Activated CD8-positive, alpha-beta memory T cell treated with anti-CD3 and anti-CD28 coated beads, Interleukin-2, amount 10 ng/mL, durations not matched to agents 7 days and 5 days (primary cell): ENCODE measurements at regions of chr6 and their contacts with region 1.

Region 1: GRCh38 chr6:127971945-127972391 is 71.1 kb upstream of the THEMIS start:
- DNase-seq: peak; percentile 83
- ATAC-seq: peak; percentile 77
- H3K4me3 Mint-ChIP-seq: peak overlapping the region; percentile 80
- H3K27ac Mint-ChIP-seq: peak overlapping the region; percentile 97
- H3K4me1 Mint-ChIP-seq: peaks cover 72% of the 10 kb centered on the region
- H3K27me3 Mint-ChIP-seq: no peaks in the 10 kb centered on the region

Region 2: GRCh38 chr6:127900935-127901334 is 71.0 kb before region 1 on chr6 and contains the start of gene THEMIS:
- CTCF ChIA-PET with region 1: interaction called, 15 read pairs
- DNase-seq: peak; percentile 82
- ATAC-seq: peak; percentile 53
- H3K4me3 Mint-ChIP-seq: peak within 1 kb of the TSS; percentile 97
- H3K27ac Mint-ChIP-seq: peak within 1 kb of the TSS; percentile 94
- H3K4me1 Mint-ChIP-seq: peaks cover 45% of the 10 kb centered on the region
- H3K27me3 Mint-ChIP-seq: no peaks in the 10 kb centered on the region
- total RNA-seq, gene THEMIS: 107 to 133 TPM

Region 3: DNA sequence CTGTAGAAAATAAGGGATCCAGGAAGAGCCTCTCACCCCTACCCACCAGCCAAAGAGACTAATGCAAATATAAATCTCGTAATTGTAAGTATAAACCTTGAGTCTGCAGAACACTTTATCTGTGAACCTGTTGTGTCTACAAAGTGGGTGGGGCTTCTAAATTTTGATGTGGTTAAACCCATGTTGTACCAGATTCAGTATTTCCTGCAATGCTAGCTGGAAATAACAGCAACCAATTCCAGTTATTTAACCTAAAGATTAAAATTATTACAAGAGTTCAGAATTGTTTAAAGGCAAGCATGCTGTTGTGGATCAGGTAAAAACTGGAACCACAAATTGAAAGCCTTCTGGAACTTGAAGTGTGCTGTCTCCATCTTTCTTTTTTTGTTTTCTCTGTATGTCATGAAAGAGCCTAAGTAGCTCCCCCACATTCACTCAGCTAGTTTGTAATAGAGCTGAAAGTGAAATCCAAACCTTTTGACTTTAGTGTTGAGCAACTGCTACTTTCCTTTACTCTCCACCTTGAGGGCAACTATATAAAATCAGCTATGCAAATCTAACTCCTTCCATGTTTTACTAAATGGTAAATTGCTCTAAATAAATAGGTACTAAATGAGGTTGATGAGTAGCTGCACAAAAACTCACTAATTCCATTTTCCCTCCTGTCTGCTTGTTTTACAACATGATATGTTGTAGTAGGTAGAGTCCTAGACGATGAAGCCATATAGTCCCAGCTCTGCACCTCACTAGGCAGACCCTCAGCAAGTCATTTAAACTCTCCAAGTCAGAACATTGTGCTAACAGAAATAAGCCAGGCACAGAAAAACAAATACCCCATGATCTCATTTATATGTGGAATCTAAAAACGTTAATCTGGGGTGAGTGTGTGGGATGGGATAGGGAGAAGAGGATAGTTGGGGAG is 53.2 kb before region 1 on chr6:
- CTCF ChIA-PET with region 1: interaction called, 12 read pairs
- DNase-seq: no peak
- ATAC-seq: peak; percentile 65
- H3K4me3 Mint-ChIP-seq: peak overlapping the region; percentile 70
- H3K27ac Mint-ChIP-seq: peak overlapping the region; percentile 77
- H3K4me1 Mint-ChIP-seq: peaks cover 84% of the 10 kb centered on the region
- H3K27me3 Mint-ChIP-seq: no peaks in the 10 kb centered on the region

Region 4: GRCh38 chr6:127933852-127934840 is 37.8 kb before region 1 on chr6:
- CTCF ChIA-PET with region 1: interaction called, 14 read pairs
- DNase-seq: peak; percentile 88
- ATAC-seq: peak; percentile 89
- H3K4me3 Mint-ChIP-seq: peak overlapping the region; percentile 71
- H3K27ac Mint-ChIP-seq: peak overlapping the region; percentile 98
- H3K4me1 Mint-ChIP-seq: peaks cover 58% of the 10 kb centered on the region
- H3K27me3 Mint-ChIP-seq: no peaks in the 10 kb centered on the region

Region 5: DNA sequence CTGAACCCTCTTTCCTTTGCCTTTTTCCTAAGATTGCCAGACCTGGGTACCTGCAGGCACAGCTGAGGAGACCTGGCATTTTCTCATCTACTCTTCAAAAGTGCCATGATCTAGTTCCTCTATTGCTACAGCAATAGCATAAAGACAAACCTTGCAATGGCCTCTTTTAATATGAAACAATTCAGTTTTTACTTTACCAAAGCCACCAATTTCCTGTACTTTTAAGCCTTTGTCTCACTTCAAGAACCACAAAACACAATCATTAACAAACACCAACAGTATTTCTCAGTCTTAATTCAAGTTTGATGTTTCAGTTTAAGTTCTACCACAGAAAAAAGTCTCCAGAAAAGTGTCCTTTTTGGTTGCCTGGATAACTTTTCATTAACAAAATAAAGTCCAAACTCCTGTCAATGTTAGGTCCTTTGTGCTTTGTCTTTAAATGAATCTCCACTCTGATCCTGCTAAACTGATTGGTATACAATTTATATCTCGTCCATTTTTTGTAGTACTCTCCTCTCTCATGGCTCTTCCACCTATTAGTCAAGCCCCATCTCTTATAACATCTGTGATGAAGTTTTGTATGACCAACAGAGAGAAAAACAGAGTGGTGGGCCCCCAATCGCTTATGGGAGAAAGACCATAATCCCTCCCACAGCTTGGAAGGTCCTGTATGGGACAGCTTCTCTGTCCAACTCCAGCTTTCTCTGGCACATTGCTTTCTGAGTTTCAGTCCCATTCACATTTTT is 20.6 kb before region 1 on chr6:
- CTCF ChIA-PET with region 1: interaction called, 25 read pairs
- DNase-seq: no peak
- ATAC-seq: peak; percentile 55
- H3K4me3 Mint-ChIP-seq: peak overlapping the region; percentile 61
- H3K27ac Mint-ChIP-seq: peak overlapping the region; percentile 97
- H3K4me1 Mint-ChIP-seq: peaks cover 72% of the 10 kb centered on the region
- H3K27me3 Mint-ChIP-seq: no peaks in the 10 kb centered on the region

Region 6: DNA sequence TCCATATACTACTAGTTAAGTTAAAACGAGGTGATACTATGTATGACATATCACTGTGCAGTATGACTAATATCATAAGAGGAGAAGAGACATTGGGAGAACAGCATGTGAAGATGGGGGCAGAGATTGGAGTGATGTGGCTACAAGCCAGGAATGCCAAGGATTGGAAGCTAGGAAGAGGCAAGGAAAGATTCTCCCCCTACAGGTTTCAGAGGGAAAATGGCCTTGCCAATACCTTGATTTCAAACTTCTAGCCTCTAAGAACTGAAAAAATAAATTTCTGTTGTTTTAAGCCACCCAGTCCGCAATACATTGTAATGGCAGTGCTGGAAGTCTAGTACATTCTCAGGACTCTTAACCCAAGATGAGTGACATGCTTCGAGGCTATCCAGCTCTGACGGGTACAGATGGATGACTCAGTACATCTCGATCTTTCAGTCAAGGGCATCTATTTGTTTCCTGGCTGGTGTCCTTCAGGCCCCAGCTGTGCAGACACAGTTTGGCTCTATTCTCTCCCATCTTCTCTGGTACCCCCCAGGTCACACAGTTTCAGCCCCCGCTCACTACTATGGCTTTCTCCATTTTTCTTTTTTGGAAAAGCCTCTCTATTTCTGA is 15.6 kb before region 1 on chr6:
- CTCF ChIA-PET with region 1: interaction called, 25 read pairs
- DNase-seq: no peak
- ATAC-seq: no peak
- H3K4me3 Mint-ChIP-seq: no peak overlapping the region
- H3K27ac Mint-ChIP-seq: no peak overlapping the region
- H3K4me1 Mint-ChIP-seq: peaks cover 46% of the 10 kb centered on the region
- H3K27me3 Mint-ChIP-seq: no peaks in the 10 kb centered on the region

Region 7: GRCh38 chr6:128029826-128030225 is 57.9 kb after region 1 on chr6:
- CTCF ChIA-PET with region 1: no interaction called
- DNase-seq: no peak
- ATAC-seq: no peak
- H3K4me3 Mint-ChIP-seq: no peak overlapping the region
- H3K27ac Mint-ChIP-seq: no peak overlapping the region
- H3K4me1 Mint-ChIP-seq: peaks cover 8% of the 10 kb centered on the region
- H3K27me3 Mint-ChIP-seq: no peaks in the 10 kb centered on the region

Region 8: DNA sequence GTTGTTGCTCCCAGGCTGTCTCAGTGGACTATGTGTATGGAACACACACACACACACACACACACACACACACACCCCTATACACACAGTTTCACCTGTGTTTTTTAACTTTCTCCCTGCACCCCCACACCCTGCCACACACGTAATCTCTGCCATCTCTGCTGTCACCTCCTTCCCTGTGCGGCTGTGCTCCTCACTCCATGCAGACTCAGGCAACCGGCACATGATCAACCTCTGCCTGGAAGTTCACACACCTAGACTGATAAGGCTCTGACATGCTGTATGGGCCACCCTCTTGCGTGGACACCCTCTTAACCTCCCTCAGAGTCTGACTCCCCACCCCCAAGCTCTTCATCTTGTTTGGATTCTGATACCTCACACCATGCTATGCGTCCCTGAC is 81.1 kb after region 1 on chr6:
- CTCF ChIA-PET with region 1: no interaction called
- DNase-seq: no peak
- ATAC-seq: no peak
- H3K4me3 Mint-ChIP-seq: no peak overlapping the region
- H3K27ac Mint-ChIP-seq: no peak overlapping the region
- H3K4me1 Mint-ChIP-seq: no peaks in the 10 kb centered on the region
- H3K27me3 Mint-ChIP-seq: no peaks in the 10 kb centered on the region